Motor neuron (in vitro differentiated cells): ENCODE measurements at regions of chr10 and their contacts with region 1.

Region 1: DNA sequence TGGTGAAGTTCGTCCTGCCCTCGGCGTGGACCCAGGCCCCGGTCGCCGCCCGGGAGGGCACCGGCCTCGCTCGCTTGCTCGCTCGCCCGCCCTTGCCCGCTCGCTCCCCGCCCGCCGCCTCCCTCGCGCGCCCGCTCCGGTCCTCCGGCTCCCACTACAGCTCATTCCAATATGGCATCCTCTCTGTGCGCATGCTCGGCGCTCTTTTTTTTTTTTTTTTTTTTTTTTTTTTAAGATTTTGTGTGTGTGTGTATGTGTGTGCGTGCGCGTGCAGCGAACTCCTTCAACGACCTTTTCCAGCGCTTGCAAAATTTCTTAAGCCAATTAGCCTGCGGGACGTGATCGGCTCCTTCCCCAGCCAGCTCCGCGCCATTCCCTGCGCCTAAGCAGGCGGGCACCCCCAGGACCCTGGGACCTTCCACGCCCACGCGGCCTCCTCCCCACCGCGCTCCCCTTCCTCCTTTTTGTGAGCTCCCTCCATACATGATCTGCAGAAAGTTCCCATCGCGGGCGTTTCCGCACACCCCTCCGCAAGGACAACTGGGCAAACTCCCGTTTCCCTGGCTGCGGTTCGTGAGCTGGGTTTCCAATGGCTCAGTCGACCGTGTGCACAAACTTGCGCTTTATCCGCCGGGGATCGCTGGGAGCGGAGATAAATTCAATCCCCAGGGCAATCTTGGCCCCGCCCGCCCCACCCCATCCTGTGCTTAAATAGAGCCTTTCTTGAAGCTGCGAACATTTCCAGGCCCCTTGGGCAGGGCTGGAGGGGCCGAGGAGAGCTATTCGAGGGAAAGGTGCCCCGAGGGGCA is at the start of gene SFMBT2:
- ATAC-seq: peak; percentile 58 to 86 (median 68)
- H3K4me3 ChIP-seq: peak within 1 kb of the TSS; percentile 61 to 96 (median 95)
- H3K27ac ChIP-seq: peak within 1 kb of the TSS; percentile 75 to 79
- H3K4me1 ChIP-seq: peaks cover 11 to 15% of the 10 kb centered on the region in 2 donors
- total RNA-seq, gene SFMBT2: 0.15 to 16.5 (median 11.9) TPM

Region 2: DNA sequence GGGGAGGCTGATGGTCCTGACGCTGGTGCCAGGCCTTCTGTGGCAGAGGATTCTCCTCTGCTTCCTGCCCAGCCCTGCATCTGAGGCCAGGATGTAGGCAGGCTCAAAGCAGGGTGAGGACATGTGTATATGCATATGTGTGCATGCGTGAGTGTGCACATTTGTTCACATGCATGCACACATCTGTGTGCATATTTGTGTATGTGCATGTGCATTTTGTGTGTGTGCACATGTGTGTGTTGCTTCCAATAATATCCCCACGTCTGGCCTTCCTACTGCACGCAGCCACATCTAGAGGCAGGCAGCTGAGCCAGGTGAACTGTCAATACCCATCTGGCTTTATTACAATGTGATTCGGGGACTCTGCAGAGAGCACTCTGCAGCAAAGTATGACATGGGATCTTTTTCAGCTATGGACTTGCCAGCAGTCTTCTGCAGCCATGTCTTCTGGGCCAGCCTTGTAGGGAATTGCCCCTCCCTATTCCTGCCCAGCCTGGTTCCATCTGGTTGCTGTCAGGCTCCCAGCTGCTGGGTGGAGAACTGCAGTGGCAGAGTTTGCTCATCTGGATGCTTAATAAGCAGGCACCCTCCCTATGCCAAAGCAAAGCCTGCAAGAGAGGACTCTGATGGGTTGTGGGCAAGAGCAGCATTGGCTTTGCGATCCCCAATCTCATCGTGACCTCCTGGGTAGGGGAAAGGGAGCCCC is 1067.6 kb before region 1 on chr10:
- in situ Hi-C with region 1: no loop called
- ATAC-seq: peak in 7 of 8 experiments; percentile 32 to 84 (median 62)
- H3K4me3 ChIP-seq: no peak overlapping the region
- H3K27ac ChIP-seq: no peak overlapping the region
- H3K4me1 ChIP-seq: no peaks in the 10 kb centered on the region

Region 3: GRCh38 chr10:6445501-6446316 is 965.4 kb before region 1 on chr10:
- in situ Hi-C with region 1: loop called in 1 of 9 experiments (anchors 25 kb)
- ATAC-seq: peak in 3 of 8 experiments; percentile 39 to 45 (median 39)
- H3K4me3 ChIP-seq: no peak overlapping the region
- H3K27ac ChIP-seq: no peak overlapping the region
- H3K4me1 ChIP-seq: no peaks in the 10 kb centered on the region

Region 4: GRCh38 chr10:6678211-6678803 is 732.8 kb before region 1 on chr10:
- in situ Hi-C with region 1: loop called in 6 of 9 experiments (anchors 25 kb)
- ATAC-seq: peak in 4 of 8 experiments; percentile 40 to 72 (median 60)
- H3K4me3 ChIP-seq: no peak overlapping the region
- H3K27ac ChIP-seq: no peak overlapping the region
- H3K4me1 ChIP-seq: no peaks in the 10 kb centered on the region

Region 5: DNA sequence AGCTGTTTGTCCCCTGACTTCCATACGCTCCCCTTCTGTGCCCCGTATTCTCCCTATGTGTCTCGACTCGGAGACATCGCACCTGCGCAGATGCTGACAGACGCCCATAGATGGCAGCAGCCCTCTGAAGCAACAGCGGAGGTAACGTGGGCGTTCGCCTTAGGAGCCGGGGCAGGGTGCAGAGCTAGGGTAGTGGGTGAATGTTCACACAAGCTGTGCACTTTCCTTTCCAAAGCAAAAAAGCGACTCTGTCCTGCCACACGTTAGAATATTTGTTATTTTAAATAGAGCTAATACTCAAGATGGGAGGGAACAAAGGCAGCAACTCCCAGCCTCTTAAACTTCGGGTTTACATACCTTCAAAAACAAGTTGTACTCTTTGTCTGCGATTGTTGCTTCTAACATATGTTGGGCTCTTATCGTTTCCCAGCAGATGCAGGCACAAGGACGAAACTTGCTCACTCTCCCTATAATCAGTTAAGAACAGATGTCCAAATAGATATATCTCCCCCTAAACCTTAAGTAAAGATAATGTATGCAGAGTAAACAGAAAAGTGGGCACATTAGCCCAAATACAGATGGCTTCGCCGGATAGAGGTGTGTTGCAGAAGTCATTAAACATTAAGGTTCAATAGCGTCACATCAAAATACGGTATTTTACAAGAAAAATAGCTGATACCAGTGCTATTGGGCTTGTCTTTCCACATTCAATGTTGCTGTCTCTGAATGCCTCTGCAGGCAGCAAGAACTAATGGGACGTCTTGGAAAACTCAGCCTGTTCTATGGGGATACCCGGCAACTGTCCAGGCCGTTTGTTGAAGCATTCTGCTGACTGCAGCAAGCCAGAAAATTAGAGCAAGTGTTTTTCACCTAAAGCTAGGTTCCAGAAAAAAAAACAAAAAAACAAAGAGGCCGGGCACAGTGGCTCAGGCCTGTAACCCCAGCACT is 490.7 kb before region 1 on chr10:
- in situ Hi-C with region 1: loop called in 2 of 9 experiments (anchors 25 kb)
- ATAC-seq: peak; percentile 38 to 100 (median 98)
- H3K4me3 ChIP-seq: no peak overlapping the region
- H3K27ac ChIP-seq: no peak overlapping the region
- H3K4me1 ChIP-seq: peaks cover 3 to 14% of the 10 kb centered on the region in 2 donors

Region 6: GRCh38 chr10:7260412-7260900 is 150.6 kb before region 1 on chr10:
- in situ Hi-C with region 1: loop called in 1 of 9 experiments (anchors 25 kb)
- ATAC-seq: peak in 7 of 8 experiments; percentile 16 to 93 (median 47)
- H3K4me3 ChIP-seq: no peak overlapping the region
- H3K27ac ChIP-seq: no peak overlapping the region
- H3K4me1 ChIP-seq: peaks cover 21 to 23% of the 10 kb centered on the region in 2 donors

Region 7: DNA sequence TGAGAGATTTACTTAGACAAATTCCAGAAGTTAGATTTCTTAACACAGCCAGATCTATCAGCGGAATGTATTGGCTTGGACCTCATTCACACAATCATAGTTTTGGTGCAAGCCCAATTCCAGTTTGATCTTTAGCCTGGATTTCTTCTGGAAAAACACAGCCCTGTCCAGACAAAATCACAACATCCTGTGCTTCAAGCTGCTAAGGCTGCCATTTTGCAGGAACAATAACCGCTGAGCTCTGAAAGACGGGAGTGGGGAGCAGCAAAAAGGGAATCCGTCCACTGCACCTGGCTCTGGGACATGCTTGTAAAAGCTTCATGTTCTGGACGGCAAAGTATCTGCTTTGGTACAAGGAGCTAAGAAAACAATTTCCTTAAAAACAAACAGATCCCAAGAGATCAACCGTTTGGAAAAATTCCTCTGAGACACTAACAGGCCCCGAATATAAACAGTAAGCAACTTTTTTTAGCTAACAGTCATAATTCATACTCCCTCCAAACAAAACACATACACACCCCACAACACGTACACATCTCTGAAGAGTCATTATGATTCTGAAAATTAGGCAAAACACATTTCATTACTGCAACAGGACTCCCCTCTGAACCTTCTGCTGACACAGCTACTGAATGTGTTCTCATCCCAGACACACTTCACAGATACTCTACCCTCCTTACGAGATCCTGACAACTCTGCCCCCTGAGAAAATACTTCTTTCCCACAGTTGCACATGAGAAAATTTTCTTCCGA is 223.3 kb after region 1 on chr10:
- in situ Hi-C with region 1: no loop called
- ATAC-seq: no peak
- H3K4me3 ChIP-seq: no peak overlapping the region
- H3K27ac ChIP-seq: no peak overlapping the region
- H3K4me1 ChIP-seq: peaks cover 3 to 4% of the 10 kb centered on the region in 2 donors